HCT116 (cell line): ENCODE measurements at regions of chr22 and their contacts with region 1.

Region 1: GRCh38 chr22:22942511-22943329 is 55.1 kb downstream of the IGLL5 start:
- DNase-seq: peak; percentile 59
- ATAC-seq: peak; percentile 99
- H3K4me3 ChIP-seq: no peak overlapping the region
- H3K27ac ChIP-seq: no peak overlapping the region
- H3K4me1 ChIP-seq: peaks cover 0 to 3% of the 10 kb centered on the region in 2 experiments; a peak in 1 of 4 replicates
- H3K27me3 ChIP-seq: no peaks in the 10 kb centered on the region
- CTCF ChIP-seq: peak; percentile 53 to 97 (median 93); a peak in 5 of 6 replicates
- POLR2A ChIP-seq: no peak
- RAD21 ChIP-seq: peak; percentile 64

Region 2: GRCh38 chr22:22848364-22848866 is 94.3 kb before region 1 on chr22:
- CTCF ChIA-PET with region 1: interaction called, 5 read pairs
- POLR2A ChIA-PET with region 1: no interaction called
- RAD21 ChIA-PET with region 1: no interaction called
- intact Hi-C with region 1: loop called (anchors 5 kb)
- DNase-seq: peak; percentile 56
- ATAC-seq: peak; percentile 100
- H3K4me3 ChIP-seq: no peak overlapping the region
- H3K27ac ChIP-seq: no peak overlapping the region
- H3K4me1 ChIP-seq: no peaks in the 10 kb centered on the region
- H3K27me3 ChIP-seq: peaks cover 15% of the 10 kb centered on the region
- CTCF ChIP-seq: peak; percentile 62 to 98 (median 97); a peak in 5 of 6 replicates
- POLR2A ChIP-seq: no peak
- RAD21 ChIP-seq: peak; percentile 64